MCF 10A (cell line): ENCODE measurements at regions of chr6 and their contacts with region 1.

Region 1: GRCh38 chr6:24385536-24386269 is 17.0 kb upstream of the MRS2 start:
- DNase-seq: no peak
- H3K4me3 Mint-ChIP-seq: no peak overlapping the region
- H3K27ac Mint-ChIP-seq: no peak overlapping the region
- H3K4me1 Mint-ChIP-seq: peaks cover 6% of the 10 kb centered on the region
- H3K27me3 Mint-ChIP-seq: no peaks in the 10 kb centered on the region
- CTCF ChIP-seq: no peak

Region 2: DNA sequence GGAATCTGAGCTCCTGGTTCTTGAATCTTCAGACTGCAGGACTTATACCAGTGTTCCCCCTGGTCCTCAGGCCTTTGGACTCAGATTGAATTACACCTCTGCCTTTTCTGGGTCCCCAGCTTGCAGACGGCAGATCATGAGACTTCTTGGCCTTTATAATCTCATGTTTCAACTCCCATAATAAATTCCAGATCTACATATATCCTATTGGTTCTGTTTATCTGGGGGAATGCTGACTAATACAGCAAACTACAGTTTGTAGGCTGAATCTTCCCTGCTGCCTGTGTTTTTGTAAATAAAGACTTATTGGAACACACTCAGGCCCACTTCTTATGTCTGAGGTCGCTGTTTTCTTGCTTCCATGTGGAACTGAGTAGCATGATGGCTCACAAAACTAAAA is 1631.6 kb before region 1 on chr6:
- CTCF ChIA-PET with region 1: no interaction called
- POLR2A ChIA-PET with region 1: no interaction called
- intact Hi-C with region 1: no loop called
- DNase-seq: no peak
- H3K4me3 Mint-ChIP-seq: no peak overlapping the region
- H3K27ac Mint-ChIP-seq: no peak overlapping the region
- H3K4me1 Mint-ChIP-seq: no peaks in the 10 kb centered on the region
- H3K27me3 Mint-ChIP-seq: no peaks in the 10 kb centered on the region
- CTCF ChIP-seq: no peak

Region 3: GRCh38 chr6:24064082-24064481 is 321.6 kb before region 1 on chr6:
- CTCF ChIA-PET with region 1: interaction called, 3 read pairs
- POLR2A ChIA-PET with region 1: no interaction called
- intact Hi-C with region 1: loop called (anchors 10 kb)
- DNase-seq: peak; percentile 44
- H3K4me3 Mint-ChIP-seq: no peak overlapping the region
- H3K27ac Mint-ChIP-seq: no peak overlapping the region
- H3K4me1 Mint-ChIP-seq: no peaks in the 10 kb centered on the region
- H3K27me3 Mint-ChIP-seq: no peaks in the 10 kb centered on the region
- CTCF ChIP-seq: peak; percentile 46

Region 4: DNA sequence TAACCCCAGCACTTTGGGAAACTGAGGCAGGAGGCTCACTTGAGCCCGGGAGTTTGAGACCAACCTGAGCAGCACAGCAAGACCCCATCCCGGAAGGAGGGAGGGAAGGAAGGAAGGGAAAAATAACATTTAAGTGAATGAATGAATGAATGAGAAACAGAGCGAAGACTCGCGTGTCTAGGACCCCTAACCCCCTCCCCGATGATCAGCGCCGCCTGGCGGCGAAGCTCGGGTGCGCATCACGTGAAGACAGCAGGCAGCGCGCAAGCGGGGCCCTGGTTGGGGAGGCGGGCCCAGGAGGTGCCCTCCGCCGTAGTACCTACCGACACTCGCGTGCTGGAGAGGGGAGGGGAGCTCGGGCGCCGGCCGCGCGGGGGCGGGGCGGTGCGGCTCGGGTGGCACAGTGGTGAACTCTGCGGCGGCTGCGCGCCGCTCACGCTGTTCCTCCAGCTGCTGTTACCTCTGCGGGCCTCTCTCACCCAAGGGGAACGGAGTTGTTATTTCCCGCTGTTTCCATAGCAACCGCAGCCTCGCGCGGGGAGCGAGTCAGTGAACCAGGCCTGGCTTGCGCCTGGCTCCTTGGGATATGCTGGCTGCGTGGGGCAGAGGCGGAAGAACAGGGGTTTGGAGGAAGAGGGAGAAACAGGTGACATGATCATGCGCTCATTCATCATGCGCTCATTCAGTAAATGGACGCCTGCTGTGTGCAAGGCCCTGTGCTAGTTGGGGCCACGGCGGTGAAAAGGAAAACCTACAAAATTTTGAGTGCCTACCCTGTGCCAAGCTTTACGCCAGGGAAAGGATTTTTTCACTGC is 25.9 kb before region 1 on chr6:
- CTCF ChIA-PET with region 1: interaction called, 26 read pairs
- POLR2A ChIA-PET with region 1: interaction called, 3 read pairs
- intact Hi-C with region 1: no loop called
- DNase-seq: peak; percentile 75
- H3K4me3 Mint-ChIP-seq: peak overlapping the region; percentile 74
- H3K27ac Mint-ChIP-seq: peak overlapping the region; percentile 83
- H3K4me1 Mint-ChIP-seq: peaks cover 4% of the 10 kb centered on the region
- H3K27me3 Mint-ChIP-seq: peaks cover 9% of the 10 kb centered on the region
- CTCF ChIP-seq: peak; percentile 83